ENCODE measurements at regions of chr1 and their contacts with region 1.

Region 1: GRCh38 chr1:172532700-172533509 is at the start of gene SUCO:
- DNase-seq: peak; percentile 98 to 100
- H3K4me3 ChIP-seq: peak within 1 kb of the TSS; percentile 82
- H3K27ac ChIP-seq: peak within 1 kb of the TSS; percentile 74
- H3K4me1 ChIP-seq: peaks cover 43% of the 10 kb centered on the region
- H3K27me3 ChIP-seq: no peaks in the 10 kb centered on the region
- CTCF ChIP-seq: no peak
- total RNA-seq, gene SUCO: 31.2 and 34.0 TPM in 2 replicates

Region 2: DNA sequence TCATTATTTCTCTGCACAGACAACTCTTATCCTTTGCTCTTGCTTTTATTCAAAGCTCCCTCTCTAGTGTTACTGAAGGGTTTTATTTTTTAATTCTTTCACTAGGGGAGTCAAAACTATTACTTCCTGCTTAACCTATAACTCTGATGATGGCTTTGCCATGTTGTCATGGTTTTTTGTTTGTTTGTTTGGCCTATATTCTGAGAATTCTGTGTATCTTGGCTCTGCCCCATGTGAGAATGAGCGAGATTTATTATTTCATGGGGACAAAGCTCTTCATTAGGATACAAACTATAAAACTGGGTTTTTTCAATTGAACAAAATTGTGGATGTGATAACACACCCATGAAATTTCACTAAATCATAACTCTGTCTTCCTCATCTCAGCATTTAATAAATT is 303.0 kb before region 1 on chr1:
- CTCF ChIA-PET with region 1: no interaction called
- POLR2A ChIA-PET with region 1: no interaction called
- intact Hi-C with region 1: no loop called
- DNase-seq: no peak
- H3K4me3 ChIP-seq: no peak overlapping the region
- H3K27ac ChIP-seq: no peak overlapping the region
- H3K4me1 ChIP-seq: no peaks in the 10 kb centered on the region
- H3K27me3 ChIP-seq: no peaks in the 10 kb centered on the region
- CTCF ChIP-seq: no peak

Region 3: GRCh38 chr1:172476218-172476811 is 56.6 kb before region 1 on chr1:
- CTCF ChIA-PET with region 1: no interaction called
- POLR2A ChIA-PET with region 1: no interaction called
- intact Hi-C with region 1: loop called (anchors 1 kb)
- DNase-seq: peak; percentile 69 to 86
- H3K4me3 ChIP-seq: no peak overlapping the region
- H3K27ac ChIP-seq: peak overlapping the region; percentile 54
- H3K4me1 ChIP-seq: peaks cover 31% of the 10 kb centered on the region
- H3K27me3 ChIP-seq: no peaks in the 10 kb centered on the region
- CTCF ChIP-seq: no peak

Region 4: DNA sequence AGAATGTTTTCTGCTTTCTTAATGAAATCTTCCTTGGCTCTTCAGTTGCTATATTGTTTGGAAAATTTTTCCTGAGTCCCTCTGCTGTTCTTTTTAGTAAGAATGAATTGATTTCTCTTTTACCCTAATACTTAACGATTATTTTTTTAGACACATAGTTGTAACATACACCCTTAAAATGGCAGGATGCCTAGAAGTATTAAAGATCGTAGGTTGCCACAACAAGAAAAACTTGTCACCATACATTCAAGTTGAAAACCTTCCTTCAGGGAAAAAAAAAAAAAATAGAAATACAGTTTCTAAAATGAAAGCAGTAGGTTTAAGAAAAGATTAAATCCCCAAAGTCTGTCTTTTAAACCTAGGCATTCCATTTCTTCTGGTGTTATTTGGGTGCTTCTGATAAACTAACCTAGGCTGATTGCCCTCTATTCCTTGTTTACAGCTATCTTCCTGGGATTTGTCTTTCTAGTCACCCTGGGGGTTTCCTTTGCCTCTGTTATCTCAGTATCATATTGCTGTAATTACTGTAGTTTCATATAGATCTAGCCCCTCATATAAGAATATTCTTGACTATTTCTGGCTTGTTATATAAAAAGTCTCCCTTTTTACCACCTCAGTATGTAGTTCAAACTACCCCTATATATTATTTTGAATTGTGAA is 16.8 kb after region 1 on chr1:
- CTCF ChIA-PET with region 1: interaction called, 3 read pairs
- POLR2A ChIA-PET with region 1: interaction called, 4 read pairs
- intact Hi-C with region 1: loop called (anchors 2 kb)
- DNase-seq: peak in 1 of 2 experiments; percentile 61
- H3K4me3 ChIP-seq: no peak overlapping the region
- H3K27ac ChIP-seq: no peak overlapping the region
- H3K4me1 ChIP-seq: peaks cover 19% of the 10 kb centered on the region
- H3K27me3 ChIP-seq: no peaks in the 10 kb centered on the region
- CTCF ChIP-seq: no peak

Region 5: DNA sequence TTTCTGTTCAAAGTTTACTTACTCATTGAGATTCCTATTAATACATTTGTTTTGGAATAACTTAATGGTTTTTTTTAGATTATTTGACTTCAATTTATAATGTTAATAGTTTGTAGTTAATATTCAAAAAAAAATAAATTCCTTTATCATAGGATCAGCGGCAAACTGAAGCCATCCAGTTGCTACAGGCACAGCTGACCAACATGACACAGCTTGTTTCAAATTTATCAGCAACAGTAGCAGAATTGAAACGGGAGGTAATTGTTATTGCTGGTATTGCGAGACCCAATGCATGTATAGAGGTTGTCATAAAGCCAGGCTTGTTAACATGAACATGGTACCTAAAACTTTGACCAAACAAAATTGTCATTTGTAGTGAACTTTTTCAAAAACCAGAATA is 67.0 kb after region 1 on chr1:
- CTCF ChIA-PET with region 1: no interaction called
- POLR2A ChIA-PET with region 1: no interaction called
- intact Hi-C with region 1: no loop called
- DNase-seq: no peak
- H3K4me3 ChIP-seq: no peak overlapping the region
- H3K27ac ChIP-seq: no peak overlapping the region
- H3K4me1 ChIP-seq: 0 out of 2 replicates have a peak, but pooled peaks cover 12% of the 10 kb centered on the region
- H3K27me3 ChIP-seq: no peaks in the 10 kb centered on the region
- CTCF ChIP-seq: no peak

Region 6: DNA sequence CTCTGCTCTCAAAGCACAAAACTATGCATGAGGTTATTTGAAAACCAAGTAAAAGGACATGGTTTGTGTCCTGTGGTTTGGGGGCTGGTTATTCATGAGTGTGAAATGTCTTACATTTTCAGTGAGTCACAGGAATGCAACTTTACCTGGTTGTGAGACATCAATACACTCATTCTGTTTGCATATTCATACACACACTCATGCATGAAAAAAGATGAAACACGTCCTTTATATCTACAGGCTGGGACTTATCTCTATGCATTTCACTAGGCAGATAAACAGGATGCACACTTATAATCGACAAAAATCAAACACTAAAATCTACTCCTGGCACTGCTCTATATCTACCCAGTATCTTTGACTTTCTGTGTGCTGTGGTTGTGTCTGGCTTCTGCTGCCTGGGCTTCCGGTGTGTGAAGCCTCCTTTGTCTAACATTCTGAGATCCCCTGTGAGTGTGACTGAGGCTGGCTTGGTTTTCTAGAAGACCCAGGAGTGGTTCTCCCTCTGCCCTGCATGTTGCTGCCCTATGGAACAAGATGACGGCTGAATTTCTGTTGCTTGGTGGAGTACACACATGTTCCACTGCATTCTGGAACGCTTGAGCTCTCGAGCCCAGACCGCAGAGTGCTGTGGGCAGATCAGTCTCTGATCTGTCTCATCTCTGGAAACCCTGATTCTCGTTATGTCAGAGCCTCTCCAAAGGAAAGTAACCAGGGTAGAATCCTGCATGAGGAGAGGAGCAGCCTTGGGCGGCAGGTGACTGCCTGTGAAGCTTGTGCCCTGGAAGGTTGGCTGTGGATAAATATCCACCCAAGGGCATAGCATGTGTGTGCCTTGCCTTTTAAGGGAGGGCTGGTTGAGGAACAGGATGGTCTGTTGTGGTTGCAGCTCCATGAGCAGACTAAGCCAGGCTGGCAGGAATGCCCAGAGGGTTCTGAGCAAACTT is 106.3 kb after region 1 on chr1:
- CTCF ChIA-PET with region 1: no interaction called
- POLR2A ChIA-PET with region 1: interaction called, 6 read pairs
- intact Hi-C with region 1: loop called (anchors 1 kb)
- DNase-seq: peak; percentile 55 to 98
- H3K4me3 ChIP-seq: peak overlapping the region; percentile 3; the same call in 1 of the 2 replicates
- H3K27ac ChIP-seq: peak overlapping the region; percentile 87
- H3K4me1 ChIP-seq: peaks cover 44% of the 10 kb centered on the region
- H3K27me3 ChIP-seq: no peaks in the 10 kb centered on the region
- CTCF ChIP-seq: no peak

Region 7: DNA sequence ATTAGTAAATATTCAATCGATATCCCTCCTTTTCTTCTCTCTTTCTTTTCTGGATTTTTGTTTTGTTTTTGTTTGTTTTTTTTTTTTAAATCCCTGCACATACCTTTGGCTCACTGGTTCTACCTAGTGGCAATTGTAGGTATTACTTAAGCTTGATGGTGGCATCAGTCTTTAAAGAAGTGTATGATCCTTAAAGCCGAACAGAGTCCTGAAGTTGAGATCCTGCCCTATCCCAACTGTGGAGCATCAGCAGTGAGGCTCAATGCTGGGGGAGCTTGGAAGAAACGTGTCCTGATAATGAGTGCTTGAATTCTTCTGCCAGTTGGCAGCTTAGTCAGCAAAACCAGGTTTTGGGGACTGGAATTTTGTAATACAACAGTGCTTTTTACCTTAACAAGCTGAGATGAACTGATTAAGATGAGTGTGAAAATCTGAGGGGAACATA is 186.8 kb after region 1 on chr1:
- CTCF ChIA-PET with region 1: interaction called, 6 read pairs
- POLR2A ChIA-PET with region 1: interaction called, 6 read pairs
- intact Hi-C with region 1: loop called (anchors 1 kb)
- DNase-seq: peak in 1 of 2 experiments; percentile 22
- H3K4me3 ChIP-seq: no peak overlapping the region
- H3K27ac ChIP-seq: no peak overlapping the region
- H3K4me1 ChIP-seq: no peaks in the 10 kb centered on the region
- H3K27me3 ChIP-seq: no peaks in the 10 kb centered on the region
- CTCF ChIP-seq: peak; percentile 90